Right ventricle myocardium superior (tissue), 1 donor: ENCODE measurements at regions of chr5 and their contacts with region 1.

Region 1: DNA sequence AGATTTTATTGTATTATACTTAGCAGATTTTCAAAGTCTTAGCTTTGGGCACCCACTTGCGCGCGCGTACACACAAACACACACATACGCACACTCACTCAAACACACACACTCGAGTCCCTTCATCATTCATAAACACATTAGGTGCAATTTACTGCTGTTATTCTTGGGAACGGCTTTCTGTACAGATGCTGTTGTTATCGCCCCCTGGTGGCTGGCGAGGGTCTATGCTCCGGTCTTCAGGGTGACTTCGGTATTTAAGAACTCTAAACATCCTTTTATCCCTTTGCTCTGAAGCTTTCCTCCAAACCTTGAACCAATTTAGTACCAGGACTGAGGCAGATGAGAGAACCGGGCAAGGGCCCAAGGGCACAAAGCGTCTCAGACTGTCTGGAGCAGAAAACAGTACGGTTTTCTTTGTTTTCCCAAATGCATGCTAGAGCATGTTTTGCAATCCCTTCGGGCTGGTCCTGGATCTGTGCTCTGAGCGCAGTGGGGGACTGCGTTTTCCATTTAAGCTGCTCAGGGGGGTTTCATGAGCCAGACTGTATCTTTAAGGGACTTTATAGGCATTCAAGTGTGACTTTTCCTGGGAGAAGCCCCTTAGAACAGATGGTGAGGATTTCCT is 1.7 kb upstream of the SLIT3 start:
- DNase-seq: peak; percentile 83
- ATAC-seq: peak; percentile 66

Region 2: GRCh38 chr5:168612996-168613395 is 689.6 kb before region 1 on chr5:
- intact Hi-C with region 1: no loop called
- DNase-seq: no peak
- ATAC-seq: peak; percentile 83

Region 3: DNA sequence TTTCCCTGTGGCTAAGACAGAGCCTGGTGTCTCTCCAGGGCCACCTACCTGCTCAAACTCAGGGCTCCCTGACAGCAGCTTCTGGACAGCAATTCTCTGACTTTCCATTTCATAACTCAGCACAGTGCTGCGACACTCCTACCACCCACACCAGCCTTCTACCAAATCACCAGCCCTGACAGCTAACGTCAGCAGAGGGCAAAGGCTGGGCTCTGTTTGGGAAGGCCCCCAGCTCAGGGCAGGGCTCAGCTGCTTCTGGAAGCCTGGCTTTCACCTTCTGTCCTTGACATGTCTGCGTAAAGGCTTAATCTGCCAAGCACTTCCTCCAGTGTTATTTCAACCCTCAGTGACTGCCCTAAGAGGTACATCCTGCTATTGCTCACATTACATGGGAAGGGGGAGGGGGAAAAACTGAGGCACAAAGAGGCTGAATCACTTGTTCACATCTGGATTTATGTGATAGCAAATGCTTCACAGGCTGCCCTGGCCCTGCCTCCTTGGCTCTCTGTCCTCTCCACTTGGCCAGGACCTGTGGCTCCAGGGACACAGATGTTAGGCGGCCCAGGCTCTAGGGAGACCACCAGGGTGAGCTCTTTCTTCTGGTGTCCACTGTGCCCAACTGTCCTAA is 620.9 kb before region 1 on chr5:
- intact Hi-C with region 1: loop called (anchors 5 kb)
- DNase-seq: peak; percentile 52
- ATAC-seq: peak; percentile 82

Region 4: GRCh38 chr5:168770036-168770498 is 532.5 kb before region 1 on chr5:
- intact Hi-C with region 1: no loop called
- DNase-seq: no peak
- ATAC-seq: no peak

Region 5: DNA sequence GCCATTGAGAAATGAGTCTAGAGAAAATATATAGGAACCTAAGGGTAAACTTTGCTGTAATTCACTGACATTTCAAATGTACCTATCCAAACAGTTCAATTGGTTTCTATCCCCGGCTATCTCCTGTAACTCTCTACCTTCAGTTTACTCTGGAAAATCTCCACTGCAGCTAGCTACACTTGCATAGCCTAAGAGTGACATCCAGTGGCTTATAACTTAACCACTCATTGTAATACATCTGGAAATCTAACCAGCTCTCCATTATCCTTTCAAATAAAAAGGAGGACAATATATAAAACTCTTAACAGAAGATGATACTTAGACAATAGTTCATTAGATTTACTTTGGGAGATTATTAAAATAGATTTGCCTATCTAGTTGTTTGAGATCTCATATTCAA is 245.7 kb after region 1 on chr5:
- intact Hi-C with region 1: loop called (anchors 10 kb)
- DNase-seq: no peak
- ATAC-seq: peak; percentile 92